ENCODE measurements at regions of chrX and their contacts with region 1.

Region 1: GRCh38 chrX:24069877-24070276 is 15.1 kb downstream of the EIF2S3 start:
- DNase-seq: no peak
- H3K4me3 ChIP-seq: no peak overlapping the region
- H3K4me1 ChIP-seq: peaks cover 6% of the 10 kb centered on the region; the same call in 1 of the 2 replicates
- H3K27me3 ChIP-seq: no peaks in the 10 kb centered on the region

Region 2: GRCh38 chrX:23993012-23993633 is 76.8 kb before region 1 on chrX:
- in situ Hi-C with region 1: no loop called
- DNase-seq: no peak
- H3K4me3 ChIP-seq: no peak overlapping the region
- H3K4me1 ChIP-seq: no peaks in the 10 kb centered on the region
- H3K27me3 ChIP-seq: no peaks in the 10 kb centered on the region

Region 3: GRCh38 chrX:24241822-24242648 is 172.2 kb after region 1 on chrX:
- in situ Hi-C with region 1: loop called (anchors 5 kb)
- DNase-seq: peak; percentile 52 to 71
- H3K4me3 ChIP-seq: no peak overlapping the region
- H3K4me1 ChIP-seq: peaks cover 11% of the 10 kb centered on the region
- H3K27me3 ChIP-seq: no peaks in the 10 kb centered on the region

Region 4: DNA sequence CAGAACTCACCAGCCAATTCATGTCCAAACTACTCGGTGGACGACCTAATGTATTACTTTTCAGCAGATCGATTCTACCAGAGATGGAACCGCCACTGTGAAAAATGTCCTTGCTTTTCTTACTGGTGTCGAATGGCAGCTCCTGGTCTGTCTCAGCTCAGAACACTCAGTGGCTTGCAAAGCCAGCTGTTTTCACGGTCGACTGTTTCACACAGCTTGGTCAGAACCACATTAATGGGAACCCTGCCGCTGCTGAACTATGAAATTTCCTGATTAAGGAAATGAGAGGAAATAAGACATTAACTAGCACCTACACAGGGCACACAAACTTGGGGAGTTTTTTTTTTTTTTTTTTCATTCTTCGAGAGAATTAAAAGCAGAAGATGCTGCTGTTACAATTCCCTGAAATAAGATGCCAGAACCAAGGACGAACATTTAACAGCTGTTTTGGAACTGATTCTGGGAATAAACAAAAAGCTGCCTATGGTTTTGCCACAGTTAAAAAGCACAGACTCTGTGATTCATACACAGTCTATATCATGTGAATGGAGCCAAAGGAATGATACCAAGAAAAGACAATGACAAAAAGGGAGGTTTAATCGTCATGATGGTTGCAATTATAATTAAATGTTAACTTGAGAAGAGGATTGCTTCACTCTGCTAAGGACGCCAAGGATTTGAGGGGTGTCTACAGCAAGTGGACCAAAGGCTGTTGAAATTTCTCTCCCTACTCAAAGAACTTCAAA is 212.7 kb after region 1 on chrX:
- in situ Hi-C with region 1: no loop called
- DNase-seq: no peak
- H3K4me3 ChIP-seq: no peak overlapping the region
- H3K4me1 ChIP-seq: no peaks in the 10 kb centered on the region
- H3K27me3 ChIP-seq: peaks cover 12% of the 10 kb centered on the region; the same call in 1 of the 2 replicates